Motor neuron (in vitro differentiated cells): ENCODE measurements at regions of chr5 and their contacts with region 1.

Region 1: DNA sequence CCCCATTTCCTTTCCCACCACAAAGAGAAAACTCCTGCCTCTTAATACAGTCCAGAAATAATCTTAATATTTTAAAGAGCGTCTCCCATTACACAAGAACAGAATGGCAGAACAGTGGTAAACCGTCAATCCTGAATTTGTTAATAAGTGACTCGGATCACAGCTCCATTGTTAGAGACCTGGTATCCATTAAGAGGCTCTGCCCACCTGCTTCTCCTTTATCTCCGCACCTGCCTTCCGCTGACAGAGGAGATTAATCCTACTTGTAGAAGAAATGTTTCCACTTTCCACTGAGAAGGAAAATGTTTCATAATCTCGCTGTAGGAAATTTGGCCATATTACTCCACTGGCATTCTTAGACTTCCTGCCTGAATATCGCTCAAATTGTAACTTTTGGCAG is 1493.2 kb downstream of the MAT2B start:
- ATAC-seq: no peak
- H3K4me3 ChIP-seq: no peak overlapping the region
- H3K27ac ChIP-seq: no peak overlapping the region
- H3K4me1 ChIP-seq: peaks cover 0 to 7% of the 10 kb centered on the region in 2 donors

Region 2: GRCh38 chr5:165209086-165209727 is 210.6 kb after region 1 on chr5:
- in situ Hi-C with region 1: loop called in 1 of 9 experiments (anchors 25 kb)
- ATAC-seq: no peak
- H3K4me3 ChIP-seq: no peak overlapping the region
- H3K27ac ChIP-seq: no peak overlapping the region
- H3K4me1 ChIP-seq: peaks cover 3 to 4% of the 10 kb centered on the region in 2 donors